ENCODE measurements at regions of chr9 and their contacts with region 1.

Region 1: DNA sequence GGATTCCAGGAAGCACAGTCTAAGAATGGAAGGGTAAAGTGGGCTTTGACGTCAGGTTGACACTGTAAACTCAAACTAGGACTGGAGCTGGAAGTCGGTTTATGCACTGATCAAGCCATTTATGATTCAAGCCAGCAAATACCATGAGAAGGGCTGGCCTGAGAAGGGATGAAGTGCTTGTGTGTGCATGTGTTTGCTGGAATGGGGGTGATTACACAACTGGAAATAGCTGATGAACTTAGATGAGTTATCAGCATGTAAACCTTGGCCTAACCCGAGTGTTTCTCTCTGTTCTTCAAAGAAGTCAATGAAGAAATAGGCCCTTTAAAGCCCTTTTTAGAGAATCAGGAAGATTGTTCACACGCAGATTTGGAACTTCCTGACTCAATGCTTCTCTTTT is 287.6 kb downstream of the RFX3 start:
- DNase-seq: no peak
- CTCF ChIP-seq: no peak

Region 2: DNA sequence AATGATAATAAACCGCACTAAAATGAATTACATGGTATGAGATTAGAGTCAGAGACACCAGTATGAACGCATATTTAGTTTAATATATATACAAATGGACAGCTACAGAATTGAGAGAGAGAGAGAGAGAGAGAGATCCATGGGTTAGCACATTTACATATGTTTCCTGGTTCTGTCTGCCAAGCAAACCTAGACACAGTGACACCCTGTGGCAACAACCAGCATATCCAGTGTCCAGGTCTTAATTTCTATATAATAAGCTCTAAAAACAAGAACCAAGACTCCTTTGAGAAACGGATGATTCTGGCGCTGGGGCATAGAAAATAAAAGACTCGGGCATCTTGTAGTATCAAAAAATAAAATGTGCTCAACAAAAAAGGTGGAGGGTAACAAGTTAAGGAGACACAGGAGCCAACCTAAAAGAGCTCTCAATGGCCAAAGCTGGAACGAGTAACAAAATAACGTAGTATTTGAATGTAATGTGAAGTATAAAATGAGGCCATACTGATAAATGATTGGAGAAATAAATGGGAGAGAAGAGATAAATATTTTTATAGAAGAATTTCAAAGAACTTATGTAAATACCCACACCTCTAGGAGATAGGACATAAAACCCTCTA is 203.1 kb after region 1 on chr9:
- in situ Hi-C with region 1: loop called (anchors 10 kb)
- DNase-seq: peak; percentile 36
- CTCF ChIP-seq: peak; percentile 49